Dorsolateral prefrontal cortex (tissue), 120 donors: ENCODE measurements at regions of chr4 and their contacts with region 1.

Region 1: GRCh38 chr4:140153718-140154571 is at the start of gene MAML3:
- DNase-seq: peak; percentile 86 to 95 (median 91)
- H3K4me3 ChIP-seq: peak within 1 kb of the TSS; percentile 52 to 92 (median 79)
- H3K27ac ChIP-seq: peak within 1 kb of the TSS; percentile 68 to 97 (median 92)
- H3K27me3 ChIP-seq: peaks cover 0 to 5% (median 0%) of the 10 kb centered on the region in 45 donors
- CTCF ChIP-seq: peak in 27 of 56 donors; percentile 6 to 53 (median 17)
- total RNA-seq, gene MAML3: 2.5 to 9.3 (median 4.8) TPM

Region 2: GRCh38 chr4:139656614-139657486 is 497.1 kb before region 1 on chr4:
- intact Hi-C with region 1: loop called in 1 of 2 experiments (anchors 5 kb)
- DNase-seq: peak in 5 of 10 donors; percentile 51 to 66 (median 62)
- H3K4me3 ChIP-seq: no peak overlapping the region
- H3K27ac ChIP-seq: peak overlapping the region in 3 of 59 donors; percentile 15 to 70 (median 21)
- H3K27me3 ChIP-seq: no peaks in the 10 kb centered on the region
- CTCF ChIP-seq: peak; percentile 52 to 84 (median 74)

Region 3: DNA sequence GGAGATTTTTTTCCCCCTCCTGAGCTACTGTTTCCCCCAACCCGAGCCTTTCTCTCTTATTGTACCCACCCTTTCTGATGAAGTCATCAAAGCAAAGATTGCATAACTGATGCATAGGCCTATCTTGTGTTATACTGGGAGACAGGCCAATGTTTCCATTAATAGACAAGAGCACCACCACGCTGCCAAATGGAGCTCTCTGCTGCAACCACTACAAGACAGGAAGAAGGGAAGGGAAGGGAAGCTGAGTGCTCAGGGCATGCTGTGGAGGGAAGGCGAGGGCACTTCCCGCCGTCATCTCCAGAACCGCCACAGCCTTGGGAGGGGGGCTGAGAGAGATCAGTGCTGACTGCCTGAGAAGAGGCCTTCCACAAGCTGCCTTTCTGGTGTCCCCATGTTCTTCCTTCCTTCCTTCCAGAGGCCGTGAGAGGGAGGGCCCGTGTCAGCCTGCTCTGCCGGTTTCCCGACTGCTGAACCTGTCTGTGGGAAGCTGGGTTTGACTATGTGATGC is 413.4 kb before region 1 on chr4:
- intact Hi-C with region 1: loop called (anchors 2 to 5 kb)
- DNase-seq: peak in 9 of 10 donors; percentile 42 to 82 (median 72)
- H3K4me3 ChIP-seq: peak overlapping the region in 20 of 59 donors; percentile 2 to 28 (median 14)
- H3K27ac ChIP-seq: peak overlapping the region; percentile 42 to 96 (median 86)
- H3K27me3 ChIP-seq: no peaks in the 10 kb centered on the region
- CTCF ChIP-seq: peak in 41 of 56 donors; percentile 5 to 56 (median 32)

Region 4: DNA sequence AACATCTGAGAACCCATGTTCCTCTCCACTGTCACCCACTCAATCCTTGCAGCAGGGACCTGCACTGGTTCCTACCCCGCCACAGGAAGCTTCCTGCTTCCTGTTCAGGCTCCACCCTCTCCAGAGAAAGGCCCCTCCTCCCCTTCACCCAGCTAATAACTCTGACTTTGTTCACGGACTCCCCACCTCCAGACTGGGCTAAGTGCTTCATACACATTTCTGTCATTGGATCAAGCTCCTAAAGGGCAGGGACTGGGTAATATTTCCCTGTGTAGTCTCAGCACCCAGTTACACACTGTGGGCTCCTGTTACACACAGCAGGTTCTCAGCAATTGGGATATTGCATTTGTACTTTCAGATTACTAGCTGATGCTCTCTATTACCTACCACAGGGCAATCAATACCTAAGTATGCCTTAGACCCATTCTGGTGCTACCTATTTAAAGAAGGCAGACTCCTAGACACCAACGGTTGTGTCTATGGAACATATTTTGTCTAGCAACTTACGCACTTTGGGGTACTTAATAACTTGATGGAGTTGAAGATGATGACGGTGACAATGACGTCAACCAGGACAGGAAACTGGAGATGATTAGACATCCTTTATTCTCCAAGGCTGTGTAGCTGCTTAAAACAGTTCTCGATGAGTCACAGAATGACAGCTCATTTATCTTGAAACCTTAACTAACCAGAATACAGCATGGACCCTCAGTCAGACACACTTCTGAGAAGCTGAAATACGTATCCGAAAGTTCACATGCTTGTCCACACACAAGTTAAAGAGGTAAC is 58.1 kb before region 1 on chr4:
- intact Hi-C with region 1: loop called (anchors 5 kb)
- DNase-seq: no peak
- H3K4me3 ChIP-seq: peak overlapping the region in 6 of 59 donors; percentile 1 to 44 (median 38)
- H3K27ac ChIP-seq: peak overlapping the region in 47 of 59 donors; percentile 3 to 85 (median 65)
- H3K27me3 ChIP-seq: no peaks in the 10 kb centered on the region
- CTCF ChIP-seq: no peak

Region 5: GRCh38 chr4:140326395-140326993 is 172.5 kb after region 1 on chr4:
- intact Hi-C with region 1: loop called in 1 of 2 experiments (anchors 5 kb)
- DNase-seq: peak in 3 of 10 donors; percentile 27 to 66 (median 60)
- H3K4me3 ChIP-seq: no peak overlapping the region
- H3K27ac ChIP-seq: no peak overlapping the region
- H3K27me3 ChIP-seq: no peaks in the 10 kb centered on the region
- CTCF ChIP-seq: peak; percentile 7 to 90 (median 72)